Transverse colon (tissue), 4 donors: ENCODE measurements at regions of chr12 and their contacts with region 1.

Region 1: GRCh38 chr12:93614917-93615596 is 42.6 kb downstream of the SOCS2 start:
- DNase-seq: no peak
- H3K4me3 ChIP-seq: no peak overlapping the region
- H3K27ac ChIP-seq: no peak overlapping the region
- H3K4me1 ChIP-seq: no peaks in the 10 kb centered on the region
- H3K27me3 ChIP-seq: no peaks in the 10 kb centered on the region
- CTCF ChIP-seq: no peak
- EP300 ChIP-seq: no peak
- POLR2A ChIP-seq: no peak

Region 2: GRCh38 chr12:93603762-93604161 is 11.3 kb before region 1 on chr12:
- in situ Hi-C with region 1: no loop called
- intact Hi-C with region 1: loop called (anchors 1 kb)
- DNase-seq: no peak
- H3K4me3 ChIP-seq: no peak overlapping the region
- H3K27ac ChIP-seq: peak overlapping the region in 2 of 4 donors; percentile 2 to 26
- H3K4me1 ChIP-seq: peaks cover 0 to 7% (median 0%) of the 10 kb centered on the region in 4 donors
- H3K27me3 ChIP-seq: no peaks in the 10 kb centered on the region
- CTCF ChIP-seq: no peak
- EP300 ChIP-seq: no peak
- POLR2A ChIP-seq: no peak